Activated naive CD4-positive, alpha-beta T cell treated with anti-CD3 and anti-CD28 coated beads, Interleukin-2, amount 10 ng/mL, durations not matched to agents 7 days and 5 days (primary cell): ENCODE measurements at regions of chr6 and their contacts with region 1.

Region 1: DNA sequence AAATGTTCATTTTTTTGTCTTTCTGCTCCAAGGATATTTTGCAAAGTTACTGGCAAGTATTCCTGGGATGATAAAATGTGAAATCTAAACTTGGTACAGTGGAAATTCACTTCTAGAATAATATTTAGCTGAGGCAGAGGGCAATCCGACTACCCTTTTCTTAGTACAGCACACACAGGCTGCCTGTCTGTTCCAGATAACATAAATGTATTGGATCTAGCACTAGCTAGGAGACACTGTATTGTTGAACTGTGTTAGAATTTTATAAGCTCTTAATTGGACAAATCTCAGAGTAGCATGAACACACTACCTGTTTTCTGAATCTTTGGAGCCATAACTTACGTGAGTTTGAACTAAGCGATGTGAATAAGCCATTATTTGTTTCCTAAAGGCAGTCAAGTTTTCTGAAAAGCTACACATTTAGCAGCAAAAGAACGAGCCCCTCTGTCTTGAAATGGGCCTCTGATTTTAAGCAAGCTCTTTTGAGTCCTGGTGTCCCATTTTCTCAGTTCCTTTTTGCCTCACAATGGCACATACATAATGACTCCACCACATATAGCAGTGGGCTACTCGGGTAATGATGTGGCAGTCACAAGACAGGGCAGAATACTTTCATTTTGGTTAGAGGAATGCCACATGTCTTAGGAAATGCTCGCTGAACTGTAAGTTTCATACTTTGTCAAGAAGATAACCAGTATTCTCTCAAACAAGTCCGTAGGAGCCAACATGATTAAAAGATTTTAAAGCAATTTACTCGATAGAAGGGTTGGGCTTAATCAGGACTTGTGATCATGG is 116.5 kb upstream of the ESR1 start:
- DNase-seq: peak; percentile 52
- H3K4me3 Mint-ChIP-seq: peak overlapping the region; percentile 79
- H3K27ac Mint-ChIP-seq: peak overlapping the region; percentile 92
- H3K4me1 Mint-ChIP-seq: peaks cover 25% of the 10 kb centered on the region
- H3K27me3 Mint-ChIP-seq: peaks cover 4% of the 10 kb centered on the region

Region 2: GRCh38 chr6:151765444-151765886 is 74.5 kb after region 1 on chr6:
- CTCF ChIA-PET with region 1: interaction called, 37 read pairs
- DNase-seq: peak; percentile 65
- H3K4me3 Mint-ChIP-seq: no peak overlapping the region
- H3K27ac Mint-ChIP-seq: no peak overlapping the region
- H3K4me1 Mint-ChIP-seq: peaks cover 40% of the 10 kb centered on the region
- H3K27me3 Mint-ChIP-seq: peaks cover 4% of the 10 kb centered on the region

Region 3: GRCh38 chr6:152124429-152125074 is 433.6 kb after region 1 on chr6:
- CTCF ChIA-PET with region 1: interaction called, 16 read pairs
- DNase-seq: no peak
- H3K4me3 Mint-ChIP-seq: no peak overlapping the region
- H3K27ac Mint-ChIP-seq: peak overlapping the region; percentile 7
- H3K4me1 Mint-ChIP-seq: peaks cover 2% of the 10 kb centered on the region
- H3K27me3 Mint-ChIP-seq: no peaks in the 10 kb centered on the region

Region 4: DNA sequence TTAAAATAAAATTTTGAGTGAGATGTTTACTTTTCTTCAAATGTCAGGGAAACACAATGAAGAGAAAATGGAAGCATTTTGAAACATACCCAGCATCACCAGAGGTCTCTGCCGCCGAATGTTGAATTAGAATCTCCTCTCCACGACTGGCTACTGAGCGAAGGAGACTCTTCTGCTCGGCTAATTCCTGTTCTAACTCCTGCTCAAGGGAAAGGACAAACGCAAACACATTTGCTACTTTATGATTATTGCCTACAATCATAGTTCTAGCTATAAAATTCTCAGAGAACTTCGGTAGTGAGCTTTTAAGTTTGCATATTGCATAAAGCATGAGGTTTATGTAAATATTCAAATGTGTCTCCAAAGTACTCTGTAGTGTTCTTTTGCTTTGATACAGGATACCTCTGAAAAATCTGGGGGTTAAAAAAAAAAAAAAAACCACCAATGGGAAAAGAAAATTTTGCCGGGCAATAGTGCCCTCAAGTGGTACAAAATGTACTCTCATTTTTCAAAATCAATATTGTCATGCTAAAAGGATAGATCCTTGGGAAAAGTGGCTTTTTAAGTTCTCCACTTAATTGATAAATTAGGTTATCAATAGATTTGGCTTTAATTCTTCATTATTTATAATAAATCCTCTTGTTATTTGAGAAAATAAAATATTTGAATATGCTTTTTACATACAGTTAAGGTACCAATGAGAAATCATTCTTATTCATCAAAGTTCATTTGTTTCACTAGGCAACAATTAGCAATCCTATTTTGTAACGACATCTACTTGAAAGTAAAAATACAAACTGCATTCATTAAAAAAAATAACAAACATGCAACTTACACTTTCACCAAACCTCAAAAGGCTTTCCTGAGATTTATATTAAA is 577.2 kb after region 1 on chr6:
- CTCF ChIA-PET with region 1: interaction called, 17 read pairs
- DNase-seq: peak; percentile 43
- H3K4me3 Mint-ChIP-seq: no peak overlapping the region
- H3K27ac Mint-ChIP-seq: no peak overlapping the region
- H3K4me1 Mint-ChIP-seq: peaks cover 3% of the 10 kb centered on the region
- H3K27me3 Mint-ChIP-seq: no peaks in the 10 kb centered on the region

Region 5: DNA sequence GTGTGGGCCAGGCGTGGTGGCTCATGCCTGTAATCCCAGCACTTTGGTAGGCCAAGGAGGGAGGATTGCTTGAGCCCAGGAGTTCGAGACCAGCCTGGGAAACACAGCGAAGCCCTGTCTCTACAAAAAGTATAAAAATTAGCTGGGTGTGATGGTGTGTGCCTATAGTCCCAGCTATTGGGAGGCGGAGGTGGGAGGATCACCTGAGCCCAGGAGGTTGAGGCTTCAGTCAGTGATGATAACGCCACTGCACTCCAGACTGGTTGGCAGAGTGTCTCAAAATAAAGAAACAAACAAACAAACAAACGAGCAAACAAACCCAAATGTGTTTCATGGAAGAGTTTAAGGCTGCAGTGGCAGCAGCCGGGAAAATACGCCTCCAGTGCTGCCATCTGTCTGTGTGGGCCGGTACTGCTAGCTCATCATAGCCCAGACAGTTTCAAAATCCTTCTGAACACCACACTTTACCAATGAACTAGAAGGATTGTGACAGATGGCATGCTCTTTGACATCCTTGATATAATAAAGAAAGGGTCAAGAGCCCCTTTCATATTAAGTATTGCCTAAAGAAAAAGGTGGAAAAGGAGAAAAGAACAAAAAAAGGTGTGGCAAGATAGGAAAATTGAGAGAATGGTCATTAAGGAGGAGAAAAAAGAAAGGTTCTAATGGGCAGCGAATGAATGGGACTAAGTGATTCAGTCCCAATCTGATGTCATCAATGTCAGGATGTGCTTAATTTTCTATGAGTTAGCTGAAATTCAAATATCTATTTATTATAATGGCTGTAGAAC is 647.6 kb after region 1 on chr6:
- CTCF ChIA-PET with region 1: interaction called, 11 read pairs
- DNase-seq: peak; percentile 67
- H3K4me3 Mint-ChIP-seq: no peak overlapping the region
- H3K27ac Mint-ChIP-seq: no peak overlapping the region
- H3K4me1 Mint-ChIP-seq: peaks cover 2% of the 10 kb centered on the region
- H3K27me3 Mint-ChIP-seq: peaks cover 29% of the 10 kb centered on the region